ENCODE measurements at regions of chr17 and their contacts with region 1.

Region 1: GRCh38 chr17:27494192-27495091 is 38.2 kb downstream of the KSR1 start:
- DNase-seq: peak; percentile 89 to 92
- ATAC-seq: peak; percentile 86
- H3K4me3 ChIP-seq: no peak overlapping the region
- H3K27ac ChIP-seq: peak overlapping the region in 1 of 2 donors; percentile 75
- H3K4me1 ChIP-seq: no peaks in the 10 kb centered on the region
- H3K27me3 ChIP-seq: no peaks in the 10 kb centered on the region

Region 2: GRCh38 chr17:27519550-27519949 is 25.1 kb after region 1 on chr17:
- intact Hi-C with region 1: no loop called
- DNase-seq: no peak
- ATAC-seq: no peak
- H3K4me3 ChIP-seq: no peak overlapping the region
- H3K27ac ChIP-seq: no peak overlapping the region
- H3K4me1 ChIP-seq: no peaks in the 10 kb centered on the region
- H3K27me3 ChIP-seq: no peaks in the 10 kb centered on the region

Region 3: GRCh38 chr17:27559506-27560481 is 65.4 kb after region 1 on chr17:
- intact Hi-C with region 1: loop called in 1 of 2 experiments (anchors 10 kb)
- DNase-seq: peak; percentile 80 to 85
- ATAC-seq: peak; percentile 80
- H3K4me3 ChIP-seq: no peak overlapping the region
- H3K27ac ChIP-seq: no peak overlapping the region
- H3K4me1 ChIP-seq: no peaks in the 10 kb centered on the region
- H3K27me3 ChIP-seq: no peaks in the 10 kb centered on the region